ENCODE measurements at regions of chr12 and their contacts with region 1.

Region 1: GRCh38 chr12:2691006-2691344 is 103.8 kb upstream of the FKBP4 start:
- DNase-seq: peak; percentile 75
- H3K4me3 Mint-ChIP-seq: peak overlapping the region; percentile 80
- H3K27ac Mint-ChIP-seq: peak overlapping the region; percentile 81
- H3K4me1 Mint-ChIP-seq: peaks cover 25% of the 10 kb centered on the region
- H3K27me3 Mint-ChIP-seq: peaks cover 2% of the 10 kb centered on the region

Region 2: DNA sequence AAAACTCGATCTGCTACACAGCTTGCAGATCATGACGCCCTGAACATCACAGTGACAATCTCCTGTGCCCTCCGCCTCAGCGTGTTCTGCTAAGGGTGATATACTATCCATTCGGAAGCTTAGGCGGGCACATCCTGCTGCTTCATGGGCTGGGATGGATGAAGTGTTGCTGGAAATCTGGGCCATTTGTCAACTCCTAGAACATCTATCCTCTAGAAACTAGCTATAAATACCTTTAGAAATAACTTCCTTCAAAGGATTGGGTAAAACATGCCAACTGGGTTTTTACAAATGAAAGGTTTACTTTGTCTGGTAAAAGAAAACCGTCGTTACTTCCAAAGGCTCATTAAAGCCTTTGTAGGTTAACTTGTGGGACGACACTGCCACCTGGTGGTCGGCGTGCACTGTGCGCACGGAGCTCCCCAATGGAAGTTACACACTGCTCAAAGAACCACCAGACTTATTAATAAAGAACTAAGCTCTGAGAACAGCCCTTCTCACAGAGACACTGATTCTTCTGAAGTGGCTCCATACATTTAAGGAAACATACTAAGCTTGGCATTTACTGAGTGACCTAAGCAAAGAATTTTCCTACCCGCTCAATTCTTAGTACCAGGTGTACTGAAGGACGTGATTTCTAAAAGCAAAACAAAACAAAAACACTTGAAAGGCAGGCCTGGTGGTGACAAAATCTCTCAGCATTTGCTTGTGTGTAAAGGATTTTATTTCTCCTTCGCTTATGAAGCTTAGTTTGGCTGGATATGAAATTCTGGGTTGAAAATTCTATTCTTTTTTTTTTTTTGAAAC is 751.0 kb before region 1 on chr12:
- CTCF ChIA-PET with region 1: no interaction called
- intact Hi-C with region 1: no loop called
- DNase-seq: peak; percentile 95
- H3K4me3 Mint-ChIP-seq: no peak overlapping the region
- H3K27ac Mint-ChIP-seq: no peak overlapping the region
- H3K4me1 Mint-ChIP-seq: no peaks in the 10 kb centered on the region
- H3K27me3 Mint-ChIP-seq: no peaks in the 10 kb centered on the region

Region 3: GRCh38 chr12:2057041-2057794 is 633.8 kb before region 1 on chr12:
- CTCF ChIA-PET with region 1: no interaction called
- intact Hi-C with region 1: loop called (anchors 5 kb)
- DNase-seq: peak; percentile 68
- H3K4me3 Mint-ChIP-seq: no peak overlapping the region
- H3K27ac Mint-ChIP-seq: no peak overlapping the region
- H3K4me1 Mint-ChIP-seq: peaks cover 10% of the 10 kb centered on the region
- H3K27me3 Mint-ChIP-seq: peaks cover 30% of the 10 kb centered on the region

Region 4: DNA sequence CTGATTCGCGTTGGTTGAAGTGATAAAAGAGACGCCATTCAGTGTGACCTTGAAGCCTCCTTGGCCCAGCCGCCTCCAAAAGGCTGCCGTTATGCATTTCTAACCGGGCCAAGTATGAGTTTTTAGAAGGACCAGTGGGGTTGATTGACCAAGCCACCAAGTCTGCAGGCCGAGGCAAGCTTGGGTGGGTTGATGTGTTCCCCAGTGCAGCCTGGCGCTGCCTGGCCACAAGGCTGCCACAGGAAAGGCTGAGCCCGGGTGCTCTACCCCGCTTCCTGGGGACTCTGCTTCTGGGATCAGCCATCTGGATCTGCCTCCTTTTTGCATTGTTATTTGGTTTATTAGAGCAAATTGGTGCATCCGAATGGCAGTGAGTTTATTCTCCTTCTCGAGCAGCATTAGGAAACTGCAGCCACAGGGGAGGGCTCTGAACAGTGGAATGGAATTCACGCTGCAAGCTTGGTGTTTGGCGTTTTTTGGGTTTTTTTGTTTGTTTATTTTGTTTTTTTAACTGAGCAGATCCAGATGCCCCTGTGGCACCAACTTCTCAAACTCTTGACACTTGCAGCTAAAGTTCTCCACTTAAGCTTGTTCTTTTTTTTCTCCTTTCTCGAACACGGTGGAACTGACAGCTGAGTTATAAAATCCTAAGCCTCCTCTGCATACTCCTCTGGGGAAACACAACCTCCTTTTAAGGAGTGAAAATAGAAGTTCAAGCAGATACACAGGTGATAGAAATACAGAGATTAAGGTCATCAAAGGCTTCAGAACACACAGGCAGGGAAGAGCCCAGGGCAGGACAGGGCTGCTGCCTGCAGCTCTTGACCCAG is 41.6 kb before region 1 on chr12:
- CTCF ChIA-PET with region 1: no interaction called
- intact Hi-C with region 1: no loop called
- DNase-seq: no peak
- H3K4me3 Mint-ChIP-seq: no peak overlapping the region
- H3K27ac Mint-ChIP-seq: no peak overlapping the region
- H3K4me1 Mint-ChIP-seq: no peaks in the 10 kb centered on the region
- H3K27me3 Mint-ChIP-seq: peaks cover 28% of the 10 kb centered on the region

Region 5: GRCh38 chr12:2783936-2784600 is 93.1 kb after region 1 on chr12:
- CTCF ChIA-PET with region 1: interaction called, 30 read pairs
- intact Hi-C with region 1: loop called (anchors 1 kb)
- DNase-seq: peak; percentile 60
- H3K4me3 Mint-ChIP-seq: peak overlapping the region; percentile 62
- H3K27ac Mint-ChIP-seq: no peak overlapping the region
- H3K4me1 Mint-ChIP-seq: peaks cover 8% of the 10 kb centered on the region
- H3K27me3 Mint-ChIP-seq: peaks cover 11% of the 10 kb centered on the region

Region 6: DNA sequence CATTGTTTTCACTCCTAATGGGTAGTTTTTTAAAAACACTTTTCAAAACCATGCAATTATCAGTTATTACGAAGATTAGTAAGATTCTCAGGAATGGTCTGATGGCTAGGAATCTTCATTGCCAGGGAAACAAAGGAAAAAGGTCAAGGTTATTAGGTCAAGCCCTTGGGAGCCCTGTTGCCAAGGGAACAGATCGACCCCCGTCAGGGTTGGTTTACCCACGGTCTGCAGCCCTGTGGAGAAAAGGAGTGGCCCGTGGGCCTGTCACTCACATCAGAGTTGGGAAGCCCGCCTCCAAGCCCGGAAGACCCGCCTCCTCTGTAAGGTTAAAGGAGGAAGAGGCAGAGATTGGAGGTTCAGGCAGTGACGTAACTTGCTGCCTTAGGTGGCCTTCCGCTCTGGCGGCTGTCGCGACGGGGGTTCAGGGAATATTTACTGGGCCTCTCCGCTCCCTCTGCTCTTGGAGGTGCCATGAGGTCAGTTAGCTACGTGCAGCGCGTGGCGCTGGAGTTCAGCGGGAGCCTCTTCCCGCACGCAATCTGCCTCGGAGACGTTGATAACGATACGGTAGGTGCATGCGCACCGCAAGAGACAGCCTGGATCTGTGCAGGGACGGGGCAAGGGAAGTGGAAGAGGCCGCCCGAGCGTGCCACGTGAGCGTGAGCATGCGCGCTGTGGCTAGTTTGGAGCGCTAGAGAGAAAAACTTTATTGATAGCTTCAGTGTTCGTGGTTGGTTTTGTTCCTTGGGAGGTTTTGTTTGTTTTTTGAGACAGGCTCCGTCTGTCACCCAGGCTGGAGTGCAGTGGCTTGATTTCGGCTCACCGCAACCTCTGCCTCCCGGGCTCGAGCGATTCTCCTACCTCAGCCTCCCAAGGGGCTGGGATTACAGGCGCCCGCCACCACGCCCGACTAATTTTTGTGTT is 121.6 kb after region 1 on chr12 and contains the start of gene ITFG2:
- CTCF ChIA-PET with region 1: no interaction called
- intact Hi-C with region 1: loop called (anchors 1 kb)
- DNase-seq: peak; percentile 98
- H3K4me3 Mint-ChIP-seq: peak within 1 kb of the TSS; percentile 99
- H3K27ac Mint-ChIP-seq: peak within 1 kb of the TSS; percentile 98
- H3K4me1 Mint-ChIP-seq: peaks cover 25% of the 10 kb centered on the region
- H3K27me3 Mint-ChIP-seq: no peaks in the 10 kb centered on the region
- total RNA-seq, gene ITFG2: 27.5 to 30.5 TPM

Region 7: DNA sequence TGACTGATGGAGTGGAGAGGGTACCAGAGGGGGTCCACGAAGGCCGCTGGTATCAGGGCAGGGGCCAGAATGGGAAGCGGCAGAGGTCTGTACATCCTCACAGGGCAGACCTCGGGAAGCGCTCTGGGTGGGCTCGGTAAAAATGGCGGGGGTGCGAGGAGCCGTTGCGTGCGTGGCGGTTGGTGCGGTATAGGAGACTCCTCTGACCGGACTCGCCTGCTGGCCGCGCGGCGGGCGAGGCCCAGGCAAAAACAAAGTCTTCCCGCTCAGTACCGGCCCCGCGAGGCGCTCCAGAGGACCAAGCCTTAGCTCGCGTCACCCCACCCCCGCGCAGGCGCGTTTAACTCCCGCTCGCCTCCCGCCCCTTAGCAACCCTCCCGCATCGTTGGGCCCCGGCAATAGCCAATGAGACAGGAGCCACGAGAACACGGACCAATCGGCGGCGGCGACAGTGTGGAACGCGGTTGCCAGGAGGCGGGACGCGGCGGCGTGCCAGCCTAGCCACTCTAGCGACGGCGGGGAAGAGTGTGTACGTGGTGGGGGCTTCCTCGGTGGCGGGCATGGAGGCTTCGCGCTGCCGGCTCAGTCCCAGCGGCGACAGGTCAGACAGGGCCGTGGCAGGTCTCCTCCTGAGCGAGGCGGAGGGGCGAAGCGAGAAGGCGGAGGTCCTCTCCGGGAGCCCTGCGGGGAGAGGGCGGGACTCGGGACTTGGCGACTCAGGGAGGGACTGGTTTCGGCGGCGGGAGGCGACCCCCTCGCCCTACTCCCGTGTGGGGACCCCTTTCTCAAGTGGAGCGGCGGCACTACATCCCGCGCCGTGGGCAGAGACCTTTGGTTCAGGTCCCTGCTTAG is 199.6 kb after region 1 on chr12 and contains the start of gene TULP3:
- CTCF ChIA-PET with region 1: interaction called, 3 read pairs
- intact Hi-C with region 1: loop called (anchors 5 kb)
- DNase-seq: peak; percentile 98
- H3K4me3 Mint-ChIP-seq: peak within 1 kb of the TSS; percentile 85
- H3K27ac Mint-ChIP-seq: peak within 1 kb of the TSS; percentile 78
- H3K4me1 Mint-ChIP-seq: peaks cover 34% of the 10 kb centered on the region
- H3K27me3 Mint-ChIP-seq: no peaks in the 10 kb centered on the region
- total RNA-seq, gene TULP3: 4.1 to 4.4 TPM

Measured in activated naive CD4-positive, alpha-beta T cell treated with anti-CD3 and anti-CD28 coated beads for 36 hours (primary cell).